ENCODE measurements at regions of chr6 and their contacts with region 1.

Region 1: GRCh38 chr6:36514554-36515456 is 32.5 kb downstream of the STK38 start:
- DNase-seq: peak; percentile 57
- H3K4me3 ChIP-seq: no peak overlapping the region
- H3K27ac ChIP-seq: no peak overlapping the region
- H3K4me1 ChIP-seq: peaks cover 14% of the 10 kb centered on the region
- H3K27me3 ChIP-seq: no peaks in the 10 kb centered on the region
- CTCF ChIP-seq: no peak

Region 2: GRCh38 chr6:36566418-36566905 is 51.7 kb after region 1 on chr6:
- CTCF ChIA-PET with region 1: no interaction called
- dilution Hi-C with region 1: loop called (anchors 5 kb)
- in situ Hi-C with region 1: no loop called
- intact Hi-C with region 1: no loop called
- DNase-seq: no peak
- H3K4me3 ChIP-seq: no peak overlapping the region
- H3K27ac ChIP-seq: no peak overlapping the region
- H3K4me1 ChIP-seq: no peaks in the 10 kb centered on the region
- H3K27me3 ChIP-seq: no peaks in the 10 kb centered on the region
- CTCF ChIP-seq: no peak

Measured in mammary epithelial cell (primary cell).